Testis (tissue), 5 donors: ENCODE measurements at regions of chr22 and their contacts with region 1.

Region 1: DNA sequence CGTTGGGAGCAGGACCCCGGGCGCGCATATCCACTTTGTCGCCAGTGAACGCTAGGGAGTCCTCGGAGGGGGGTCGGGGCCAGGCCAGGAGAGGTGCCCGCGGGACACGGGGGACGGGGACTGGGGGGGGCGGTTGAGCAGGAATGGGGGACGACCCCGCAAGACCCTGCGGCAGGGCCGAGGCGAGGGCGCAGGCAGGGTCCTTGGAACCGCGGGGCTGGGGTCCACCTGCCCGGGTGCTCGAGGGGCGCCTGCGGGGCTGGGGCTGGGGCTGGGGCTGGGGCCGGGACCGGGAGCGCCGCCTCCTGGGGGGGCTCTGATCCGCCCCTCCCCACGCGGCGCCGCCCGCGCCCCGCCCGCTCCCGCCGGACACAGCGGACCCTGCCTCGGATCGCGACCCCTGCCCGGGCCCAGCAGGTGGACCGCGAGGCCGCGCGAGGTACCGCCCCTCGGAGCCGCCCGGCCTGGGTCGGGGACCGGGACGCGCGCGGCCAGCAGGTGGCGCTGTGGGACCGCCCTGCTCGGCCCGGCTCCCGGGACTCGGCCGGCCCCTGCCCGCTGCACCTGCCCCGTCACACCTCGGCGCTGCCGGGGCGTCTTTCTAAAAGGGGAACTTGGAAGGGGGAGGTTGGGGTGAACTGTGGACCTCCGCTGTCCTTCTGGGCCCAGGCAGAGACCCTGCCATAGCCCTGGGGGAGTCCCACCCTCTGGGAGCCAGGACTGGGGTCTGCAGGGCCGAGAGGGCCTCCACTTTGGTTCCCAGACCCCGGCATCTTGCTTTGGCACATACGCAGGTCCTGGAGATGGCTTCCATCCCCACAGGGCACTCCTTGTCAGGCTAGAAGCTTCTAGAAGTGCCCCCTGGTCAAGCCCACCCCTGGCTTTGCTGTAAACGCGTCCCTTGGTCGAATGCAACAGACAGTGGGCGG is 11.0 kb downstream of the CRELD2 start:
- DNase-seq: peak; percentile 61
- H3K4me3 ChIP-seq: no peak overlapping the region
- H3K27ac ChIP-seq: no peak overlapping the region
- H3K4me1 ChIP-seq: peaks cover 22% of the 10 kb centered on the region
- H3K27me3 ChIP-seq: no peaks in the 10 kb centered on the region
- CTCF ChIP-seq: peak; percentile 95 to 99 (median 99)
- POLR2A ChIP-seq: no peak

Region 2: DNA sequence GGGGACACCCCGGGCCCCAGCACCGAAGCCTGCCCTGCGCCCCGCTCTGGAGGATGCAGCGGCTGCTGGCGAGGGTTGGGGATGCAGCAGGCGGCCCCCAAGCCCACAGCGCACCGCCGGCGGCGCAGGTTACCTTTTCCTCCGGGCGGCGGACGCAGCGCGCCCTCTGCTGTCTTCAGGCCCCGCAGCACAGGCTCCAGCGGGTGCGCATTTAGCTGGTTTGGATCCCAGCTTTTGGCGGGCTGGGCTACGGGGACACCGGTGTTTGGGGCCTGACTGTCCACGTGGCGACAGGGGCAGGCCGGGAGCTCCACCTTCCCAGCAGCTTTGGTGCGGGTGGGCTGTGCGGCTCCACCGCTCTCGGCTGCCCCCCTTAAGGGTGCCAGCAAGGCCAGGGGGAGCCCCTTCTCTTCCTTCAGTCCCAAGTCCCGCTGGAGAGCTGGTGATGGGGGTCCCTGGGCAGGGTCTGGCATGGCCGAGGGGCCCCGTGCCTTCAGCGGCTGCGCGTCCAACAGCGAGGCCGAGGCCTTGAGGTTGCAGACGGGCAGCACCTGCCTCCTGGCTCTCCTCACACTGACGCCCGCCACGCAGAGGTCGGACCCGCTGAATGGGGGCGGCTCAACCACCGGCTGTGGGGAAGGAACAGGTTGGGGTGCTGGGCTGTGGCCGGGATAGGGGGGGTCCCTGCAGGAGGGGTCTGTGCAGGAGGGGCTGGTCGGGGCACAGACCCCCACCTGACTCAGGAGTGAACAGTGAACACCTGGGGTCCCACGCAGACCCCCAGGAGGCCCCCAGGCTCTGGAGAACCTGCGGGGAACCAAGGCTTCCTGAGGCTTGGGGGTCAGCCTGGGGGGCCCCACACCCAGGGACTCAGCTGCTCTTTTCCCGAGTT is 101.1 kb after region 1 on chr22:
- intact Hi-C with region 1: loop called (anchors 2 kb)
- DNase-seq: peak; percentile 74
- H3K4me3 ChIP-seq: no peak overlapping the region
- H3K27ac ChIP-seq: no peak overlapping the region
- H3K4me1 ChIP-seq: peaks cover 3% of the 10 kb centered on the region
- H3K27me3 ChIP-seq: no peaks in the 10 kb centered on the region
- CTCF ChIP-seq: peak; percentile 86 to 88 (median 87)
- POLR2A ChIP-seq: no peak

Region 3: GRCh38 chr22:50131894-50132293 is 202.4 kb after region 1 on chr22:
- intact Hi-C with region 1: no loop called
- DNase-seq: no peak
- H3K4me3 ChIP-seq: no peak overlapping the region
- H3K27ac ChIP-seq: no peak overlapping the region
- H3K4me1 ChIP-seq: peaks cover 5% of the 10 kb centered on the region
- H3K27me3 ChIP-seq: no peaks in the 10 kb centered on the region
- CTCF ChIP-seq: no peak
- POLR2A ChIP-seq: no peak

Region 4: GRCh38 chr22:50141891-50142363 is 212.5 kb after region 1 on chr22:
- intact Hi-C with region 1: no loop called
- DNase-seq: no peak
- H3K4me3 ChIP-seq: no peak overlapping the region
- H3K27ac ChIP-seq: no peak overlapping the region
- H3K4me1 ChIP-seq: peaks cover 7% of the 10 kb centered on the region
- H3K27me3 ChIP-seq: no peaks in the 10 kb centered on the region
- CTCF ChIP-seq: no peak
- POLR2A ChIP-seq: no peak